ENCODE measurements at regions of chr17 and their contacts with region 1.

Region 1: GRCh38 chr17:32006957-32007462 is at the start of gene LRRC37B:
- DNase-seq: no peak
- ATAC-seq: peak; percentile 96
- H3K4me3 ChIP-seq: peak within 1 kb of the TSS; percentile 80 to 90
- H3K27ac ChIP-seq: peak within 1 kb of the TSS; percentile 76
- H3K4me1 ChIP-seq: peaks cover 5% of the 10 kb centered on the region
- H3K27me3 ChIP-seq: no peaks in the 10 kb centered on the region
- CTCF ChIP-seq: peak; percentile 98
- total RNA-seq, gene LRRC37B: 24.9 TPM

Region 2: DNA sequence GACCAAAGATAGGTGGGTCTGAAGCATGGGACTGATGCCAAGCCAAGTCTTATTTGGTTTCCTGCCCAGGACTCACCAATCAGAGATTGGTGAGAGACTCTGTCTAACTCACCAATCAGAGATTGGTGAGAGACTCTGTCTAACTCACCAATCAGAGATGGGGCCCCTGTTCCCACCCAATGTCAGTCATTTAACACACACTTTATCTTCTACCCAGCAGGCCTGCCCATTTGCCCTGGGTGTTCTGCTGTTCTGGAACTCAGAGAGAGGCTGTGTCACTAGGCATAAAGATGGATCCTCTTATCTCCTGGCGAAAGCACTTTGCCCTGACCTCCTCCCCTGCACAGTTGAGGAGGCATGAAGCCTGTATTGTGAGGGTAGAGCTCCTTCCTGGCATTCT is 129.8 kb after region 1 on chr17:
- CTCF ChIA-PET with region 1: interaction called, 16 read pairs
- POLR2A ChIA-PET with region 1: no interaction called
- in situ Hi-C with region 1: no loop called
- intact Hi-C with region 1: loop called (anchors 5 kb)
- DNase-seq: no peak
- ATAC-seq: no peak
- H3K4me3 ChIP-seq: no peak overlapping the region
- H3K27ac ChIP-seq: no peak overlapping the region
- H3K4me1 ChIP-seq: peaks cover 10% of the 10 kb centered on the region; the same call in 1 of the 2 replicates
- H3K27me3 ChIP-seq: no peaks in the 10 kb centered on the region
- CTCF ChIP-seq: no peak

Region 3: GRCh38 chr17:32142038-32142856 is 135.2 kb after region 1 on chr17 and contains the start of gene RHOT1:
- CTCF ChIA-PET with region 1: interaction called, 16 read pairs
- POLR2A ChIA-PET with region 1: no interaction called
- in situ Hi-C with region 1: no loop called
- intact Hi-C with region 1: loop called (anchors 5 kb)
- DNase-seq: peak; percentile 66
- ATAC-seq: peak; percentile 85
- H3K4me3 ChIP-seq: peak within 1 kb of the TSS; percentile 95 to 100
- H3K27ac ChIP-seq: peak within 1 kb of the TSS; percentile 94
- H3K4me1 ChIP-seq: peaks cover 16% of the 10 kb centered on the region
- H3K27me3 ChIP-seq: no peaks in the 10 kb centered on the region
- CTCF ChIP-seq: peak; percentile 86
- total RNA-seq, gene RHOT1: 39.2 TPM